A673 (cell line): ENCODE measurements at regions of chr9 and their contacts with region 1.

Region 1: GRCh38 chr9:134690946-134691694 is 49.5 kb downstream of the COL5A1 start:
- DNase-seq: no peak
- H3K4me3 ChIP-seq: no peak overlapping the region
- H3K27ac ChIP-seq: no peak overlapping the region
- H3K4me1 ChIP-seq: no peaks in the 10 kb centered on the region
- H3K27me3 ChIP-seq: no peaks in the 10 kb centered on the region
- CTCF ChIP-seq: no peak

Region 2: GRCh38 chr9:134536101-134536900 is 154.8 kb before region 1 on chr9:
- CTCF ChIA-PET with region 1: no interaction called
- POLR2A ChIA-PET with region 1: interaction called, 21 read pairs
- intact Hi-C with region 1: no loop called
- DNase-seq: no peak
- H3K4me3 ChIP-seq: no peak overlapping the region
- H3K27ac ChIP-seq: no peak overlapping the region
- H3K4me1 ChIP-seq: no peaks in the 10 kb centered on the region
- H3K27me3 ChIP-seq: no peaks in the 10 kb centered on the region
- CTCF ChIP-seq: no peak

Region 3: GRCh38 chr9:136023410-136024225 is 1332.5 kb after region 1 on chr9:
- CTCF ChIA-PET with region 1: no interaction called
- POLR2A ChIA-PET with region 1: interaction called, 11 read pairs
- intact Hi-C with region 1: no loop called
- DNase-seq: no peak
- H3K4me3 ChIP-seq: no peak overlapping the region
- H3K27ac ChIP-seq: peak overlapping the region; percentile 33
- H3K4me1 ChIP-seq: peaks cover 19% of the 10 kb centered on the region
- H3K27me3 ChIP-seq: no peaks in the 10 kb centered on the region
- CTCF ChIP-seq: no peak